Left ventricle myocardium superior (tissue), 1 donor: ENCODE measurements at regions of chr5 and their contacts with region 1.

Region 1: GRCh38 chr5:72307968-72308852 is 11.8 kb downstream of the MRPS27 start:
- DNase-seq: peak; percentile 99
- ATAC-seq: peak; percentile 99

Region 2: GRCh38 chr5:72138943-72139521 is 169.2 kb before region 1 on chr5:
- intact Hi-C with region 1: loop called (anchors 10 kb)
- DNase-seq: no peak
- ATAC-seq: peak; percentile 27

Region 3: GRCh38 chr5:72441861-72442540 is 133.8 kb after region 1 on chr5:
- intact Hi-C with region 1: no loop called
- DNase-seq: no peak
- ATAC-seq: no peak